ENCODE measurements at regions of chr7 and their contacts with region 1.

Region 1: DNA sequence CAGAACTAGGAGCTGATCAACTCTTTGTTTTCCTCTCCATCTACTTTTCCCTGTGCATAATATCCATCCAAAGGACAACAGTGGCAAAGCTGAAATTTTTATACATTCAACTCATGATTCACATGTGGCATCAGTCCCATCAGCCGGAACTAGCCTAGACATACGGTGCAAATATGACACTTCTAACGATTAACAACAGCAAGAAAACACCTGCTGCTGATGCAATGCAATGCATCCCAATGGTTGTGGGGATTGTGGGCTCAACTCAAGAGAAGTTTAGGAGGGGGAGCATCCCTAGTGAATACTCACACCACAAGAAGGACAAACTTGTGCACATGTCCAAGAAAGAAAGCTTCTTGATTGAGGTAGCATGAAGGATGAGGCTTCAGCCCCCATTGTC is 20.5 kb upstream of the STK17A start:
- DNase-seq: no peak
- ATAC-seq: no peak
- H3K4me3 ChIP-seq: no peak overlapping the region
- H3K27ac ChIP-seq: no peak overlapping the region
- H3K4me1 ChIP-seq: peaks cover 2% of the 10 kb centered on the region; the same call in 1 of the 2 replicates
- H3K27me3 ChIP-seq: peaks cover 8% of the 10 kb centered on the region
- CTCF ChIP-seq: no peak
- POLR2A ChIP-seq: no peak
- RAD21 ChIP-seq: no peak

Region 2: DNA sequence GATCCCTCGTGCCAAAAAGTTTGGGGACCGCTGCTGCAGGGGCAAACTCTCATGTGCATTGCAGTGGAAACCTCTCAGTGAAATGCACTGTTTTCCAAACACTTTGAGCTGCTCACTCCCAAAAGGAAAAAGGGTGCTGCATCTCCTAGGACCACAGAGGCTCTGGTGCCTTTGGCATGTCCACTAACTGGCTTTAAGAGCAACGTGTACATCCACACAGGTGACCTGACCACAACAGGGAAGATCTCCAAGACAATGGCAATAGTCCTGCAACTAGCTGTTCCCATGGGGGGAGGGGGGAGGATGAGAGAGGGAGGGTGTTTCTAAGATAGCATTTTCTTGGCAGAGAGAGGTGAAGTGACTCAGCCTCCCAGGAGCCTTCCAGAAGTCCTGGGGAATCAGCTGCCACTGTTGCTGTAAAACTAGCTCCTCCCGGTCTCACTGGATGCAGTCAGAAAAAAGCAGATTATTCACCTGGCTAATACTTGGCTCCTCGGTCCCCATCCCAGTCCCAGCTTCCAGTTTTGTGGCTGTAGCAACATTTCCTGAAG is 268.2 kb before region 1 on chr7:
- CTCF ChIA-PET with region 1: no interaction called
- POLR2A ChIA-PET with region 1: no interaction called
- dilution Hi-C with region 1: no loop called
- in situ Hi-C with region 1: no loop called
- intact Hi-C with region 1: no loop called
- DNase-seq: peak; percentile 78
- ATAC-seq: peak; percentile 93
- H3K4me3 ChIP-seq: no peak overlapping the region
- H3K27ac ChIP-seq: no peak overlapping the region
- H3K4me1 ChIP-seq: peaks cover 7% of the 10 kb centered on the region; the same call in 1 of the 2 replicates
- H3K27me3 ChIP-seq: no peaks in the 10 kb centered on the region
- CTCF ChIP-seq: no peak
- POLR2A ChIP-seq: no peak
- RAD21 ChIP-seq: no peak

Region 3: GRCh38 chr7:43689115-43689514 is 126.7 kb after region 1 on chr7:
- CTCF ChIA-PET with region 1: no interaction called
- POLR2A ChIA-PET with region 1: no interaction called
- dilution Hi-C with region 1: no loop called
- in situ Hi-C with region 1: no loop called
- intact Hi-C with region 1: no loop called
- DNase-seq: no peak
- ATAC-seq: peak; percentile 53
- H3K4me3 ChIP-seq: no peak overlapping the region
- H3K27ac ChIP-seq: no peak overlapping the region
- H3K4me1 ChIP-seq: peaks cover 10% of the 10 kb centered on the region
- H3K27me3 ChIP-seq: no peaks in the 10 kb centered on the region
- CTCF ChIP-seq: no peak
- POLR2A ChIP-seq: no peak
- RAD21 ChIP-seq: no peak

Region 4: DNA sequence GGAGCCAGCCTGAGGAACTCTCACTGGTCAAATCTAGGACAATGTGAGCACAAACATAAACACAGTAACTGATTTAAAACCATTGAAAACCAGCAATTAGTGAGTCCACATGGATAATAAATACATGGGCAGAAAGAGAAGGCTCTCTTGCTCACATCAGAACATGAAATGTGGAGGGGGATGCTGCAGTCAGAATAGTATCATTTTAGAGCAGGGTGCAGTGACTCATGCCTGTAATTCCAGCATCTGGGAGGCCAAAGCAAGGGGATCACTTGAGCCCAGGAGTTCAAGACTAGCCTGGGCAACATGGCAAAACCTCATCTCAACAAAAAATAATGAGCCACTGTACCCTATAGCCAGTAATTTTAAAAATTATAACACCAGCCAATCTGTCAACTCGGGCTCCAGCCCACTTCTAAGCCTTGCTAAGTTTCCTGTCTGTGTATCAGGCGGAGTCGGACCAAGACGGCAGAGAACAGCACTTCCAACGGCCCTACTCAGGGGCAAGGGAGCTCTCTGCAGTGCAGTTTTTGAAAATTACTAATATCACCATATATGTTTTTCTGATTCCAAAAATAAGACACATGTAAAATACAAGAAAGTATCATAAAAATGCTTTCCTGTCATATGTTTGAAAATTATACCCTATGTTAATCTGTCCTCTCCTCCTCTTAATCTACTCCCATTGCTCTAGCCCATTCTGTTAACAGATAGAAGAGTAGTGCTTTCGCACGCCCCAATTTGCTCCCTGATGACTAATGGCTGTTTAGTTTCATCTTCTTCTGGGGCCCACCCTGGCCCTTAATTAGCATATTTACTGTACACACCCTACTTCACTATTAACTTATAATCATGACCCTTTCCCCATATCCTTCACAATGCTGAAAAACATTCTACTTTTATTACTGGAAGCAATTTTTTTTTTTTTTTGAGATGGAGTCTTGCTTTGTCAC is 326.9 kb after region 1 on chr7:
- CTCF ChIA-PET with region 1: no interaction called
- POLR2A ChIA-PET with region 1: interaction called, 15 read pairs
- dilution Hi-C with region 1: no loop called
- in situ Hi-C with region 1: no loop called
- intact Hi-C with region 1: no loop called
- DNase-seq: peak; percentile 51
- ATAC-seq: peak; percentile 85
- H3K4me3 ChIP-seq: no peak overlapping the region
- H3K27ac ChIP-seq: no peak overlapping the region
- H3K4me1 ChIP-seq: peaks cover 2% of the 10 kb centered on the region; the same call in 1 of the 2 replicates
- H3K27me3 ChIP-seq: no peaks in the 10 kb centered on the region
- CTCF ChIP-seq: no peak
- POLR2A ChIP-seq: no peak
- RAD21 ChIP-seq: no peak